Activated CD4-positive, alpha-beta T cell treated with anti-CD3 and anti-CD28 coated beads for 36 hours (primary cell): ENCODE measurements at regions of chr1 and their contacts with region 1.

Region 1: GRCh38 chr1:226736908-226737818 is 1.9 kb downstream of the ITPKB start:
- DNase-seq: peak; percentile 79
- ATAC-seq: peak; percentile 46
- H3K4me3 Mint-ChIP-seq: peak overlapping the region; percentile 88
- H3K27ac Mint-ChIP-seq: peak overlapping the region; percentile 85
- H3K4me1 Mint-ChIP-seq: peaks cover 42% of the 10 kb centered on the region
- H3K27me3 Mint-ChIP-seq: no peaks in the 10 kb centered on the region

Region 2: DNA sequence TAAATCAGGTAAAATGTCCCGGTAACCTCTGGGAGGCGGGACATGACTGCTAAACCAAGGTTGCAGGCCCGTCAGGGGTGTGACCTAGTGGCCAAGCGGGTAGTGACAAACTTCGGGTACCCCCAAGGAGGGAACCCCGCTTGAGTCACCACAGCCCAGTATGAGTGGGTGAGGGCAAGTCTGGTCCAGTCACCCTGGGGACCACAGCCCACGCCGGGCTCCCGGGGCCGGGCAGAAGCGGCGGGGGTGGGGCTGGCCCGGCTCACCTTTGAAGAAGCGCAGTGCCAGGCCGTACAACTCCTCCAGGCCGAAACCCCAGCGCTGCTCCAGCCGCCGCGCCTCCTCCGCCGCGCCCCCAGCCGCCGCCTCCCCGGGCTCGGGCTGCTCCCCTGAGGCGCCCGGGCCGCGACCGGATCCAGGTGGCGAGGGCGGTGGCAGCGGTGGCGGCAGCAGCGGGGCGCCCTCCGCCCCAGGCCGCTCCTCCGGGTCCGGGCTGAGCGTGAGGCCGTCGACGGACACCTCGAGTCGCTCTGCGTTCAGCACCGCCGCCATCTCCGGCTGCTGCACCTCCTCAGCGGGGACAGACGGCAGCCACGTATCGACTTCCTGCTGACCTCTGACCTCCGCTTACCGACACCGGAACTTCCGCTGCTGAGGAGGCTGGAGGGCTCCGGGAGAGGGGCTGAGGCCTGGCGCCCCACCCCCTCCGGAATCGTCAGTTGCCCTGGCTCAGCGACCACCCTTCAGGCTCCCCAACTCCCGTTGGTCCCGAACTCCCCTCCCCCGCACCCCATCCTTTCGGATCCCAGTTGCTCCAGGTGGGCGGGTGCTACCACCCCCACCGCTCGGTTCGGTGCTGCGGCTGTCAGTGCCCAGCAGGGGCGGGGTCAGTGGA is 550.8 kb before region 1 on chr1 and contains the start of gene ACBD3:
- CTCF ChIA-PET with region 1: no interaction called
- POLR2A ChIA-PET with region 1: no interaction called
- intact Hi-C with region 1: loop called in 1 of 2 experiments (anchors 10 kb)
- DNase-seq: peak; percentile 91
- ATAC-seq: peak; percentile 97
- H3K4me3 Mint-ChIP-seq: peak within 1 kb of the TSS; percentile 91
- H3K27ac Mint-ChIP-seq: peak within 1 kb of the TSS; percentile 92
- H3K4me1 Mint-ChIP-seq: peaks cover 36% of the 10 kb centered on the region
- H3K27me3 Mint-ChIP-seq: no peaks in the 10 kb centered on the region
- total RNA-seq, gene ACBD3: 17.0 to 20.2 TPM

Region 3: DNA sequence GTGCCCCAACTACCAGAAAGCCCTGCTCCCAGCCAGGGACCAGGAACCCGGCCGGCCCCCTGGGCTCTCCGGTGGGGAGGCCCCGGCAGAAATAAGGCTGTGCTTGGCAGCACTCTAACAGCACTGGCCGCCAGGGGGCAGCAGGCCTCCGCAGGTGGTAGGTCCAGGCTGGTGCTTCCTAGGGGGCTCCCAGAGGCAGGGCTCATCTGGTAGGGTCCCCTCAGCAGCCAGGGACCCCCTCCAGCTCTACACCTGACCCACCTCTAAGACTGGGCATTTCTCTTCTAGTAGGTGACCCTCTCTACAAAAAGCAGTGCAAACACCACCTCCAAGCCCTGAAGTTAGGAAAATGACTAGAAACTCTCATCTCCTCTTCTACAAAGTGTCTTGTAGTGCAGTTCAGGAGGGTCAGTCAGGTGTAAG is 103.0 kb before region 1 on chr1:
- CTCF ChIA-PET with region 1: interaction called, 5 read pairs
- POLR2A ChIA-PET with region 1: interaction called, 8 read pairs
- intact Hi-C with region 1: loop called (anchors 1 to 2 kb)
- DNase-seq: peak; percentile 91
- ATAC-seq: peak; percentile 70
- H3K4me3 Mint-ChIP-seq: no peak overlapping the region
- H3K27ac Mint-ChIP-seq: peak overlapping the region; percentile 17
- H3K4me1 Mint-ChIP-seq: peaks cover 49% of the 10 kb centered on the region
- H3K27me3 Mint-ChIP-seq: no peaks in the 10 kb centered on the region

Region 4: GRCh38 chr1:226679853-226680516 is 57.2 kb before region 1 on chr1:
- CTCF ChIA-PET with region 1: interaction called, 6 read pairs
- POLR2A ChIA-PET with region 1: no interaction called
- intact Hi-C with region 1: loop called in 1 of 2 experiments (anchors 1 kb)
- DNase-seq: peak; percentile 89
- ATAC-seq: peak; percentile 20
- H3K4me3 Mint-ChIP-seq: peak overlapping the region; percentile 67
- H3K27ac Mint-ChIP-seq: peak overlapping the region; percentile 95
- H3K4me1 Mint-ChIP-seq: peaks cover 99% of the 10 kb centered on the region
- H3K27me3 Mint-ChIP-seq: no peaks in the 10 kb centered on the region

Region 5: DNA sequence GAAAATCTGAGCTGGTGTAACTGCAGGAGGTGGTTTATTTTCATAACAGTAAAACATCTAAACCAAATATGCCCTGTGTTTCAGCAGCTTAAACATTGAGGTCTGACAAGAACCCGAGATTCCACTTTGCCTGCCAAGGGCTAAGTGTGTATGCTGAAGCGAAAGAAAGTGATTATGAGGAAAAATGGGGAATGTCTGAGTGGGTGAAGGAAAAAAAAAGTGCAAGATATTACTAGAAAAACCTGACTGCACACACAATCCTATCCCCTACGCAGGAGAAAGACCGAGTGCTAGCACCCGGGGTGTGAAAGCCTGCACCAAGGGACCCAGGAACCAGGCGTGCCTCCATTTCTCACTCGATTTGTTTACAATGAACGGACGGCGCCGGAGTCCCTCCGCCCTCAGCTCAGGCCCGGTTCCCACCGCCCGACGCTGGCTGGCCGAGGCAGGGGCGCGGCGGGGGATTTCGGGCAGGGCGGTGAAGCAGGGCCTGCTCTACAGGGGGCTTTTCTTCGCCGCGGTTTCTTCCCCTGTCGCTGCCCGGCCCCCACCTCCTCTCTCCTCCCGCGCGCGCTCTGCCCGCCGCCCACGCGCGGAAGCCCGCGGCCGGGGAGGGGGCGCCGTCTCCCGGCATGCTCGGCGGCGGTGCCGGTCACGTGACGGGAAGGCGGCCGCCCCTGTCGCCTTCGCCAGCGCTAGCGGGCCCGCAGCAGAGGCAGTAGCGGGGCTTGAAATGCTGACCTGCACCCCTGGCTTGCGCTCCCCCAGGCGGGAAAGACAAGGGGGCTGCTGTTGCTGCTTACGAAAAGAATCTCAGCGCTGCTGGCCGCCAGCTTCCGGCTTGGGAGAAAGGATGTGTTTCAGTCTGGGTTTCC is 34.0 kb before region 1 on chr1:
- CTCF ChIA-PET with region 1: interaction called, 6 read pairs
- POLR2A ChIA-PET with region 1: interaction called, 6 read pairs
- intact Hi-C with region 1: loop called (anchors 2 to 5 kb)
- DNase-seq: peak; percentile 90
- ATAC-seq: peak; percentile 61
- H3K4me3 Mint-ChIP-seq: peak overlapping the region; percentile 84
- H3K27ac Mint-ChIP-seq: peak overlapping the region; percentile 97
- H3K4me1 Mint-ChIP-seq: peaks cover 85% of the 10 kb centered on the region
- H3K27me3 Mint-ChIP-seq: no peaks in the 10 kb centered on the region

Region 6: DNA sequence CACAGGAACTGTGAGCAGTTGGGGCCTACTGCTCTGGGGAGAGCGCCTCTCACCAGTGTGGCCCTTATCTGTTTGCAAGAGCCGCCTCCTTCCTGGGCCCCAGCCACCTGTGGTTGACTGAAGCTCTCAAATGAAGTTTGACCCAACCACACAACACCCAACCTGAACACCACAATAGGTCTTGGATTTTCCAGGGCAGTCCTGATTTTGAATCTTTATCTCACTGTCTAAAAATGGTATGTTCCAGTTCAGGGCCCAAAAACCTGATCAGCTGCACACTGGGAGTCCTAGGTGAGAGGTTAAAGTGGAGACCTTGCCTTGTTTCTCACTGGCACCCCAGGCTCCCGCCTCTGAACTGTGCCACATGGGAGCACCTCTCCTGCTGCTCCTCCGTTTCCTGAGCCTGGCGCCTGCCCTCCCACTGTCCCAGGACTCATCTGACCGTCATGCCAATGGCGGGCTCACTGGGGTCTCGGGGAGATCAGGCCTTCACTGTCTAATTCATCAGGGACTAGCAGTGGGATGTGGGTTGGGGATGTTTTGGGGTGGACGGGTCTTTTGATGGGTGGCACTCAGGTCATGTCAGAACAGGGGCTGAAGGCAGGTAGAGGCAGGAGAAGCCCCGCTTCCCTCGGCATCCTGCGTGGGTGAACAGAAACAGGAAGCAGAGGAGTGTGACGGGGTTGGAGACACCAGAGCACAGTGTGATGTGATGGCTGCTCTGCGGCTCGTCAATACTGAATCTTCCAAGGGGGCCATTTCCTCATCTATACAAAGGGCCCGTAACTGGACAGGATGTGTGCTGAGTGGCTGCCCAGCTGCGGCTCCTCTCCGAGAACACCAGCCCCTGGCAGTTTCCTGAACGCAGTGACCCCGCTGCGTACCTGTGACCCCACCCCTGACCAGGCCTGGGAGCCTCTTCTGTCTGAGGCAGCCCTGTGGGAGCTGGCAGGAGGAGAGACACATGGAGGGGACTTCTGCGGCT is 61.6 kb after region 1 on chr1:
- CTCF ChIA-PET with region 1: interaction called, 3 read pairs
- POLR2A ChIA-PET with region 1: no interaction called
- intact Hi-C with region 1: loop called (anchors 1 to 2 kb)
- DNase-seq: peak; percentile 80
- ATAC-seq: peak; percentile 83
- H3K4me3 Mint-ChIP-seq: peak overlapping the region; percentile 44
- H3K27ac Mint-ChIP-seq: peak overlapping the region; percentile 92
- H3K4me1 Mint-ChIP-seq: peaks cover 38% of the 10 kb centered on the region
- H3K27me3 Mint-ChIP-seq: no peaks in the 10 kb centered on the region

Region 7: DNA sequence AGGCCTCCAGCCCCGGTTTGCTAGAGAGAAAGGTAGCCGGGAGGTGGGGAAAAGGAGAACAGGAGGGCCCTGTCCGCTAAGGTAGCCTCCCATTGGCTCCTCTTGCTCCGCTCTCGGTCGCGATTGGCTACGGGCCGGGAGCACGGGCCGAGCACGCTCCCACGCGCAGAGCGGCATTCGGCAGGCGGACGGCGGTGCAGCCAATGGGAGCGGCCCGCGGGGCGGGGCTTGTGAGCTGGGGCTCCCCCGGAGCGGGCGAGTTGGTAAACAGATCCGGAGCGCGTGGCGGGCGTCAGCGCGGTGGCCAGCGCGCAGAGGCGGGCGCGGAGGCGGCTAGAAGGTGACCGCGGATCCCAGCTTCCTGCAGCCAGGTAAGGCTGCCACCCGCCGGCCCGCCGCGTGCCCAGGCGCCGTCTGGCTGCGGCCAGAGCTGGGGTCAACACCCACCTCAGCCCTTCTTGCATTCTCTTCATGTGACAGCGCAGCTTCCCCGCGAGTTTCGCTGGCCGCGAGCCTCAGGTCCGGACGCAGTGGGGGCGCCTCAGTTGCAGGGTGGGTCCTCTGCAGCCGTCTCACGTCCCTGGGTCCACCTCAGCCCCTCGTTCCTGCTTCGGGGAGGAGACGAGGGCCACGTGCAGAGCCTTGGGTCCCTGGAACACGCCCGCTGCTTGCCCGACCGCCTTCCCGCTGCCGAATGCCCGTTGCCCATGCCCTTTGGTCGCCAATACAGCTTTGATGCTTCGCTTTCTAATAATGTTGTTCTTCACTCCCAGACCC is 203.1 kb after region 1 on chr1 and contains the start of gene COQ8A:
- CTCF ChIA-PET with region 1: no interaction called
- POLR2A ChIA-PET with region 1: no interaction called
- intact Hi-C with region 1: loop called in 1 of 2 experiments (anchors 1 kb)
- DNase-seq: peak; percentile 100
- ATAC-seq: peak; percentile 97
- H3K4me3 Mint-ChIP-seq: peak within 1 kb of the TSS; percentile 82
- H3K27ac Mint-ChIP-seq: peak within 1 kb of the TSS; percentile 96
- H3K4me1 Mint-ChIP-seq: peaks cover 53% of the 10 kb centered on the region
- H3K27me3 Mint-ChIP-seq: no peaks in the 10 kb centered on the region
- total RNA-seq, gene COQ8A: 21.3 to 26.9 TPM